GM10248 (cell line): ENCODE measurements at regions of chr6 and their contacts with region 1.

Region 1: GRCh38 chr6:1596088-1596852 is 13.4 kb upstream of the FOXC1 start:
- DNase-seq: peak; percentile 83
- CTCF ChIP-seq: peak; percentile 91

Region 2: GRCh38 chr6:1162367-1163275 is 433.6 kb before region 1 on chr6:
- CTCF ChIA-PET with region 1: no interaction called
- POLR2A ChIA-PET with region 1: no interaction called
- DNase-seq: no peak
- CTCF ChIP-seq: no peak

Region 3: DNA sequence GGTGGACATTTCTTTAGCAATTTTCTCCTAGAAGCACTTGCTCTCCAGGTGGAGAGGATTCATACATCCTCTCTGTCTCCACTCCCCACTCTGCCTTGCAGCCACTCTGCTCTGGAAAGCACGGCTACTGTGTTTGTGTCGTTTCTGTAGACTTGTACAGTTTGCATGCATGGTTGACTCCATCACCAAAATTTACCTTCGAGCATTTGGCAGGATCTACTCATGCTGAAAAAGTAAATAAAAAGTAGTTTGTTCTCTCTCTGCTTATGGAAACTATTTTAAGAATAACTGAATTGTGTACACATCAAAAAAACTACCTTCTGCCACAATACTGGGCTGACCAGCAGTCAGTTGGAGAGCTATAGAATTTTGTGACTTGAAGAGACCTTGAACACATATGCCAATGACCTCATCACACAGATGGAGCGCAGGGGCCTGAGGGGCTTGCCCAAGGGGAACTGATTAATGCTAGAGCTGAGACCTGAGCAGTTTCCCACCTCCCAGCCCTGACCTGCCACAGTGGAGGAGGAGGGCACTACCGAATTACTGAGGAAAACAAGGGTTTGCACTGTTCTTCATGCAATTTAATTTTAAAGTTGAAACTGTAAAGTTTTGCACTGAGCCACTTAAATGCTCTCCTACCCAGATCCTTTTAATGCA is 318.1 kb before region 1 on chr6:
- CTCF ChIA-PET with region 1: no interaction called
- POLR2A ChIA-PET with region 1: no interaction called
- DNase-seq: no peak
- CTCF ChIP-seq: no peak

Region 4: GRCh38 chr6:1832836-1833787 is 236.8 kb after region 1 on chr6:
- CTCF ChIA-PET with region 1: no interaction called
- POLR2A ChIA-PET with region 1: no interaction called
- DNase-seq: no peak
- CTCF ChIP-seq: no peak

Region 5: GRCh38 chr6:1911474-1911873 is 315.2 kb after region 1 on chr6:
- CTCF ChIA-PET with region 1: no interaction called
- POLR2A ChIA-PET with region 1: no interaction called
- DNase-seq: no peak
- CTCF ChIP-seq: no peak

Region 6: DNA sequence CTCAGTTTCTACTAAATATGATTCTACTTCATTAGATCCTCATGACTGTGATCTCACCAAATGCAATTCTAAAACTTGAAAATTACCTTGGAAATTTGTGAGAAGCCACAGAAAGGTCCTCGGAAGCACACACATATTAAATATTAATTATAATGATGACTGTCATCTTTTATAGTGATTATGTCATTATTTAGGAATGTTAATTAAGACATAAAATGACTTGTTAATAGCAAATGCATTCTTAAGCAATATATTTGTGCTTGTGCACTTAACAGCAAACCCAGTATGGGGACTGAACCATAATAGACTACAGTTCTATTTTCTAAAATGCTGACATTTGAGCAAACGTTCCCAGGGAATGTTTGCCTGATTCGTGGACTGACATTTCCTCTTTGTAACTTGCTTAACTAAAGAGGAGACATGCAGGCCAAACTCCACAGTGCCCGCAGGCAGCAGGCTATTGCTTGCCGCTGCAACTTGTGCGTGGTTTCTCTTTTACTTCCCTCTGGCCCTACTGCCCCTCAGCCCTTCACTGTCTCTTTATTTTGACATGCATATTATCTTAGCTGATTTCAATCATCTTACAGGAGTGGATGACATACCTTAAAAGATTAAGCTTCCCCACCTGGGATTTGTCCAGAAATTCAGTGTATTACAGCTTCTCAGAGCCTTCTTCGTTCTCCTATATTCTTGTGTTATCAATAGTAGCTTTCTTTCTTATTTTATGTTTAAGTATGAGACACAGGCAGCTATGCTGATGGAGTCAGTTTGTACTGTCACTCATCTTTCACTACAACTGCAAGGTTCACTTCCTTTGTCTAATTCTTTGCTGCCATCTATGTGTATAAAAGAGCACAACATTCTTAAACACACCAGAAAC is 507.6 kb after region 1 on chr6:
- CTCF ChIA-PET with region 1: interaction called, 18 read pairs
- POLR2A ChIA-PET with region 1: no interaction called
- DNase-seq: peak; percentile 59
- CTCF ChIP-seq: peak; percentile 57

Region 7: DNA sequence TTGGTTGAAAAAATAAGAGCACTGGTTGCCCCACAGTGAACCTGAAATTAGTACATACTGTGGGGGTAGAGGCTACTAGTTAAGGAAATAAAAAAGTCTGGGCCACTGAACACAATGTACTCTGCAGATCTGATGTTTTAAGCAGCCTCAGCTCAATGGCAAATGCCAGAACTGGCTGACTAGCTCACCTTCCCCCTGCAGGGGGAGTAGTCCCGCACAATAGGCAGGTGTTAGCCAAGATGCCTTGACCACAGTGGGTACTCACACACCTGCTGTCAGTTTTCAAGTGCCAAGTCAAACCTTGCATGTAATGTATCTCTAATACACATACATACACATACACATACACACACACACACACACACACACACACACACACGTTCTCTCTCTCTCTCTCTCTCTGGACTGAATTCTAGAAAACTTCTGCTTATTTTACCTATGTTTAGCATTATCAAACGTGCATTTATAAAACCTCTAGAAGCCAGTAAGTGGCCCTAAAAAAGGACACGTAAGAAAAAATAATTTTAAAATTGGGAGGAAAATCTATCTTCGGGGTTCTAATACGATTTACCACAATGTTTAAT is 613.0 kb after region 1 on chr6:
- CTCF ChIA-PET with region 1: interaction called, 11 read pairs
- POLR2A ChIA-PET with region 1: no interaction called
- DNase-seq: peak; percentile 39
- CTCF ChIP-seq: peak; percentile 70

Region 8: DNA sequence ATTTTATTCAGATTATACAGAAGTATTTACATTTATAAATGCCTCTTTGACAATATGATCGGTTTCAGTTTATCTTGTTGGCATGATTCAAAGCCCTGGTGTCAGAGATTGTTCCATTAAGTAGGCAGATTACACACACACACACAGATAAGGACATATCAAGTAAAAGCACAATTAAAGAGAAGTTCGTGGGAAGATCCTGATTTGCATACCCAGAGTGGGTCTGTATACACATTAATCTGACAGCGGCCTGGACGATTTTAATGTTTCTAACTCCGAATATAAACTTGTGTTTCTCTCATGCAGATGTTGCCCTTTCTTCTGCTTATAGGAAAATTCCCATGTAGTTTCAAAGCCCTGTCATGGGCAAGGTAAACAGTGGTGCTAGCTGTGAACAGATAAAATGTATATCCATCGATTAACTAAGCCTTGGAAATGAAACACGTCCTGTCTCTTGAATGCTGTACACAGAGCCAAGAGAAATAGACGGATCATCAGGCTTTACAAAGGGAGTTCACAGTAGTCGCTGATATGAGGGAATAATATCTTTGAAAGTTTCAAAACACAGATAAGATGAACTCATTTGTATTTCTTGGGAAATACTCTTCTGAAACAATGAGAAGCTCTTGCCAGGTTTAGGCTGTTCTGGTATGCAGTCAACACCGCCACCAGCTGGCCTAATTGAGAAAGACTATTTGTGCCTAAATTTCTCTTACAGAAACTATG is 757.3 kb after region 1 on chr6:
- CTCF ChIA-PET with region 1: interaction called, 33 read pairs
- POLR2A ChIA-PET with region 1: no interaction called
- DNase-seq: peak; percentile 57
- CTCF ChIP-seq: peak; percentile 67

Region 9: GRCh38 chr6:2634139-2634964 is 1038.1 kb after region 1 on chr6:
- CTCF ChIA-PET with region 1: interaction called, 77 read pairs
- POLR2A ChIA-PET with region 1: no interaction called
- DNase-seq: peak; percentile 87
- CTCF ChIP-seq: peak; percentile 89